Tibial artery (tissue), 4 donors: ENCODE measurements at regions of chr4 and their contacts with region 1.

Region 1: GRCh38 chr4:87838890-87839591 is 6.3 kb downstream of the MEPE start:
- DNase-seq: peak in 1 of 2 donors; percentile 31
- H3K4me3 ChIP-seq: no peak overlapping the region
- H3K27ac ChIP-seq: no peak overlapping the region
- H3K4me1 ChIP-seq: peaks cover 0 to 10% (median 3%) of the 10 kb centered on the region in 4 donors
- H3K27me3 ChIP-seq: no peaks in the 10 kb centered on the region
- CTCF ChIP-seq: peak; percentile 74 to 75

Region 2: DNA sequence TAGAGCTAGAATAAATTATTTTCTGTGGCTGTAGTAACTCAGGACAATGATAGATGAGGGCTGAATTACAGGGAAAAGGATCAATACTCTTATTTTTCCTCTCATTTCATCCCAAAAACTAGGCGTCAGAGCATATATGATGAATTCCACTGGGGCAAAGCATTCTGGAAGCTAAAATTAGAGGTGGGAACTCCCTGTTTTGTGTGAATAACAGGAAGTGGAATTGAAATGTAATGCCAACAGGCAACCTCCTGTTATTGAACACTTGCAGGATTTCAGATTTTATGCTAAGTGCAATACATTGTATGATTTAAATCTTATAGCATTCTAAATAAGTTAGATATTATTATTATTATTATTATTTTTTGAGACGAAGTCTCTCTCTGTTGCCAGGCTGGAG is 469.0 kb before region 1 on chr4:
- intact Hi-C with region 1: loop called (anchors 5 kb)
- DNase-seq: no peak
- H3K4me3 ChIP-seq: no peak overlapping the region
- H3K27ac ChIP-seq: no peak overlapping the region
- H3K4me1 ChIP-seq: no peaks in the 10 kb centered on the region
- H3K27me3 ChIP-seq: no peaks in the 10 kb centered on the region
- CTCF ChIP-seq: no peak

Region 3: GRCh38 chr4:87543835-87544461 is 295.1 kb before region 1 on chr4:
- intact Hi-C with region 1: loop called (anchors 5 kb)
- DNase-seq: peak in 1 of 2 donors; percentile 35
- H3K4me3 ChIP-seq: no peak overlapping the region
- H3K27ac ChIP-seq: no peak overlapping the region
- H3K4me1 ChIP-seq: peaks cover 0 to 40% (median 3%) of the 10 kb centered on the region in 4 donors
- H3K27me3 ChIP-seq: no peaks in the 10 kb centered on the region
- CTCF ChIP-seq: peak; percentile 70

Region 4: GRCh38 chr4:87679449-87680169 is 159.4 kb before region 1 on chr4:
- intact Hi-C with region 1: loop called (anchors 2 kb)
- DNase-seq: peak in 1 of 2 donors; percentile 43
- H3K4me3 ChIP-seq: no peak overlapping the region
- H3K27ac ChIP-seq: no peak overlapping the region
- H3K4me1 ChIP-seq: peaks cover 0 to 7% (median 1%) of the 10 kb centered on the region in 4 donors
- H3K27me3 ChIP-seq: no peaks in the 10 kb centered on the region
- CTCF ChIP-seq: peak; percentile 66 to 78

Region 5: DNA sequence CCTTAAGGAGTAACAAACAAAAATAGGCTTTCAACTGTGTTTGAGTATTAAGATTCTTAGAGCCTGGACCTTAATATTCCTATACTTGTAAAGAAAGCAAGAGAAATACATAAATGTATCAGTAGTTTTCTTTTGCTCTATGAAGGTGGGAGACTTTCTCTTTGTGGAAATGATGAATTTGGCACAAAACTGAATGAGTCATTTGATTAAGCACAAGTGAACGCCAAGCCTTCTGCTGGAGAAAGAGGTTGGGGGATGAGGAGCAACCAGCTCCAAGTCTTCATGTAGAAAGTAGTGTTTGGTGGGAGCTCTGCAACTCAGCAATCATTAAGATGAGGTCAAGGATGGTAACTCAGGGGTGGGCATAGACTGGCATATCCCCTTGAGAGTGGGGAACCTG is 43.3 kb after region 1 on chr4:
- intact Hi-C with region 1: no loop called
- DNase-seq: no peak
- H3K4me3 ChIP-seq: no peak overlapping the region
- H3K27ac ChIP-seq: no peak overlapping the region
- H3K4me1 ChIP-seq: no peaks in the 10 kb centered on the region
- H3K27me3 ChIP-seq: no peaks in the 10 kb centered on the region
- CTCF ChIP-seq: no peak